GM12878 (cell line): ENCODE measurements at regions of chr3 and their contacts with region 1.

Region 1: GRCh38 chr3:152376351-152377183 is 107.8 kb downstream of the MBNL1 start:
- DNase-seq: peak; percentile 97
- ATAC-seq: peak; percentile 83
- H3K4me3 ChIP-seq: no peak overlapping the region; the same call in 1 of the 2 replicates
- H3K27ac ChIP-seq: peak overlapping the region; percentile 90
- H3K4me1 ChIP-seq: peaks cover 30% of the 10 kb centered on the region
- H3K27me3 ChIP-seq: no peaks in the 10 kb centered on the region
- CTCF ChIP-seq: no peak
- EP300 ChIP-seq: peak; percentile 95 to 99
- POLR2A ChIP-seq: peak; percentile 53
- RAD21 ChIP-seq: no peak

Region 2: GRCh38 chr3:152298393-152299242 is 77.9 kb before region 1 on chr3:
- CTCF ChIA-PET with region 1: no interaction called
- POLR2A ChIA-PET with region 1: interaction called, 3 read pairs
- RAD21 ChIA-PET with region 1: interaction called, 9 read pairs
- SMC1A ChIA-PET with region 1: interaction called, 6 read pairs
- in situ Hi-C with region 1: no loop called
- intact Hi-C with region 1: loop called (anchors 2 kb)
- DNase-seq: peak; percentile 74
- ATAC-seq: peak; percentile 71
- H3K4me3 ChIP-seq: peak overlapping the region; percentile 8
- H3K27ac ChIP-seq: peak overlapping the region; percentile 56
- H3K4me1 ChIP-seq: peaks cover 40% of the 10 kb centered on the region
- H3K27me3 ChIP-seq: no peaks in the 10 kb centered on the region
- CTCF ChIP-seq: no peak
- EP300 ChIP-seq: no peak
- POLR2A ChIP-seq: no peak
- RAD21 ChIP-seq: no peak

Region 3: DNA sequence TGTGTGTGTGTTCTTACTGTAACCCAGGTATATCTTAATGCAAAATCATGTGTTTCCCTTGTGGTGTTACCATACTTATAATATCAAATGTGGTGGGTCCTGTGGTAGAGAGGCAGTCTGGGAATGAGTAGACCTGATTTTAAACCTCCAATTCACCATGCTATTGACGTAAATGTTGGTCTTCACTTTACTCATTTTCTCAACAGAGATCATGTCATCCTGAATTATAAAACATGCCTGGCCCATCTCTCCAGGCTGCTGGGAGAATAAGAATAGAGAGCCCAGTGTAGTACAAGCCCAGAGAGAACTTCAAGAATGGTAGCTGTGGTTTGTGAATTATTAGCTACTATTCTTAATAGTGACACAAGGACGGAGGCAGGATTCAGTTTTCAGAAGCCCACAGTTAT is 19.7 kb before region 1 on chr3:
- CTCF ChIA-PET with region 1: interaction called, 21 read pairs
- POLR2A ChIA-PET with region 1: interaction called, 3 read pairs
- RAD21 ChIA-PET with region 1: interaction called, 9 read pairs
- SMC1A ChIA-PET with region 1: interaction called, 55 read pairs
- in situ Hi-C with region 1: no loop called
- intact Hi-C with region 1: loop called (anchors 1 kb)
- DNase-seq: peak; percentile 61
- ATAC-seq: peak; percentile 89
- H3K4me3 ChIP-seq: no peak overlapping the region
- H3K27ac ChIP-seq: peak overlapping the region; percentile 48
- H3K4me1 ChIP-seq: peaks cover 14% of the 10 kb centered on the region
- H3K27me3 ChIP-seq: no peaks in the 10 kb centered on the region
- CTCF ChIP-seq: no peak
- EP300 ChIP-seq: peak; percentile 90
- POLR2A ChIP-seq: no peak
- RAD21 ChIP-seq: no peak

Region 4: GRCh38 chr3:152365766-152366593 is 10.6 kb before region 1 on chr3:
- CTCF ChIA-PET with region 1: interaction called, 21 read pairs
- POLR2A ChIA-PET with region 1: interaction called, 9 read pairs
- RAD21 ChIA-PET with region 1: interaction called, 12 read pairs
- SMC1A ChIA-PET with region 1: interaction called, 55 read pairs
- in situ Hi-C with region 1: no loop called
- intact Hi-C with region 1: no loop called
- DNase-seq: no peak
- ATAC-seq: no peak
- H3K4me3 ChIP-seq: no peak overlapping the region
- H3K27ac ChIP-seq: no peak overlapping the region
- H3K4me1 ChIP-seq: no peaks in the 10 kb centered on the region
- H3K27me3 ChIP-seq: no peaks in the 10 kb centered on the region
- CTCF ChIP-seq: no peak
- EP300 ChIP-seq: no peak
- POLR2A ChIP-seq: no peak
- RAD21 ChIP-seq: no peak

Region 5: GRCh38 chr3:152399374-152399773 is 22.8 kb after region 1 on chr3:
- CTCF ChIA-PET with region 1: interaction called, 17 read pairs
- POLR2A ChIA-PET with region 1: interaction called, 13 read pairs
- RAD21 ChIA-PET with region 1: interaction called, 12 read pairs
- SMC1A ChIA-PET with region 1: interaction called, 20 read pairs
- in situ Hi-C with region 1: no loop called
- intact Hi-C with region 1: no loop called
- DNase-seq: no peak
- ATAC-seq: 0 out of 3 replicates have a peak, but pooled peaks have one; percentile 8
- H3K4me3 ChIP-seq: no peak overlapping the region
- H3K27ac ChIP-seq: no peak overlapping the region
- H3K4me1 ChIP-seq: no peaks in the 10 kb centered on the region; the same call in 1 of the 2 replicates
- H3K27me3 ChIP-seq: no peaks in the 10 kb centered on the region
- CTCF ChIP-seq: no peak
- EP300 ChIP-seq: no peak
- POLR2A ChIP-seq: no peak
- RAD21 ChIP-seq: no peak